H1 (cell line): ENCODE measurements at regions of chr3 and their contacts with region 1.

Region 1: GRCh38 chr3:10945683-10946287 is 46.8 kb upstream of the SLC6A1 start:
- DNase-seq: peak; percentile 64 to 92
- H3K4me3 ChIP-seq: no peak overlapping the region
- H3K27ac ChIP-seq: no peak overlapping the region
- H3K4me1 ChIP-seq: no peaks in the 10 kb centered on the region
- H3K27me3 ChIP-seq: no peaks in the 10 kb centered on the region; a peak in 1 of 7 replicates
- CTCF ChIP-seq: peak; percentile 79 to 96 (median 89)
- EP300 ChIP-seq: no peak
- POLR2A ChIP-seq: no peak
- RAD21 ChIP-seq: peak; percentile 84 to 94

Region 2: GRCh38 chr3:10683106-10683505 is 262.7 kb before region 1 on chr3:
- CTCF ChIA-PET with region 1: no interaction called
- POLR2A ChIA-PET with region 1: no interaction called
- DNase-seq: no peak
- H3K4me3 ChIP-seq: no peak overlapping the region
- H3K27ac ChIP-seq: no peak overlapping the region
- H3K4me1 ChIP-seq: no peaks in the 10 kb centered on the region
- H3K27me3 ChIP-seq: no peaks in the 10 kb centered on the region; a peak in 1 of 7 replicates
- CTCF ChIP-seq: no peak
- EP300 ChIP-seq: no peak
- POLR2A ChIP-seq: no peak
- RAD21 ChIP-seq: no peak

Region 3: DNA sequence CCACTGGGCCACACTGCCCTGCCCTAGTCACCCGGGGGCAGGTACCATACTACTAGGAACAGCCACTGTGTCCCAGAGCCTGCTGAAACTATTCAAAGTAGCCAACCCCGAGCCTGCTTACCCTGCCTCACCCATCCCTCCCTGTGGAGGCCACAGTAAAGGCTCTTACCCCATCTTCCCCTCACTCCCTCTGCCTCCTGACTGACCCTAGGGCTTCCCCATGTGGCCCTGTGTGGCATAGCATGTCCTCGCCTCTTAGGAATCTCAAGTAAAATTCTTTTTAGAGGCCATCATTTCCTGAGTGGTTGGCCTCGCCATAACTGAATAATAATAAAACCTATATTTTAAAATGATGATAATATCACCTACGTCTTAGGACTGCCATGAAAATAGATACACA is 241.9 kb before region 1 on chr3:
- CTCF ChIA-PET with region 1: no interaction called
- POLR2A ChIA-PET with region 1: no interaction called
- DNase-seq: peak; percentile 49 to 66
- H3K4me3 ChIP-seq: no peak overlapping the region
- H3K27ac ChIP-seq: no peak overlapping the region
- H3K4me1 ChIP-seq: peaks cover 2 to 10% (median 6%) of the 10 kb centered on the region in 4 experiments
- H3K27me3 ChIP-seq: peaks cover 8 to 39% (median 31%) of the 10 kb centered on the region in 4 experiments
- CTCF ChIP-seq: peak; percentile 78 to 87 (median 79)
- EP300 ChIP-seq: peak in 1 of 2 experiments; percentile 84; a peak in 1 of 3 replicates
- POLR2A ChIP-seq: no peak
- RAD21 ChIP-seq: peak; percentile 90 to 95

Region 4: GRCh38 chr3:10883478-10884234 is 62.1 kb before region 1 on chr3:
- CTCF ChIA-PET with region 1: interaction called, 10 read pairs
- POLR2A ChIA-PET with region 1: no interaction called
- DNase-seq: peak in 1 of 2 experiments; percentile 61
- H3K4me3 ChIP-seq: no peak overlapping the region
- H3K27ac ChIP-seq: no peak overlapping the region
- H3K4me1 ChIP-seq: no peaks in the 10 kb centered on the region; a peak in 1 of 7 replicates
- H3K27me3 ChIP-seq: peaks cover 0 to 15% (median 10%) of the 10 kb centered on the region in 4 experiments; a peak in 6 of 7 replicates
- CTCF ChIP-seq: peak in 2 of 3 experiments; percentile 66 to 68; a peak in 3 of 4 replicates
- EP300 ChIP-seq: no peak
- POLR2A ChIP-seq: no peak
- RAD21 ChIP-seq: peak; percentile 70 to 76

Region 5: DNA sequence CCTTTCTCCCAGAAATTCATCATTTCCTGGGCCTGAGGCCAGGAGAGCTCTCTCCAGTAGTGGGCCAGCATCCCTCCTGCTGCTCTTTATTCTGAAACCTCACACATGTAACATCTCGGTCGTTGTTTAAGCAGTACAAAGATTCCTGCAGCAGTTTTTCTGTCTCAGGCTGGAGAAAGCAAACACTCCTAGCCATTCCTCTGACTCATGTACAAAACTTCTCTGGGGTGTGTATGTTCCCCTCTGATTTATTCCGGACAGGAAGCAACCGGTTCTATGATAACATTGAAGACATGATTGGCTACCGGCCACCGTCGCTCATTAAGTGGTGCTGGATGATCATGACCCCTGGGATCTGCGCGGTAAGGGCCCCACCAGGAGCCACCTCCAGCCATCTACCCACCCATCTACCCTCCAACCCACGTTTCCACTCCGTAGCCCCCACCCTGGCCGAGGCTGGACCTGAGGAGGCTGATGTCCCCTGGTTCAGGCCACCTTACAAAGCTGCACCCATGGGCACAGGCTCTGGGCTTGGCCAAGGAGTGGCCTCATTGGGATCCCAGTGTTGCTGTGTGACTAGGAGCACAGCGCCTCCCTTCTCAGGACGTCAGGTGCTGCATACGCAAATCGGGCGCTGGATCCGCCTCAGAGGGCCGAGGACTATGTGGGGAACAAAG is 11.8 kb before region 1 on chr3:
- CTCF ChIA-PET with region 1: interaction called, 26 read pairs
- POLR2A ChIA-PET with region 1: no interaction called
- DNase-seq: no peak
- H3K4me3 ChIP-seq: no peak overlapping the region
- H3K27ac ChIP-seq: no peak overlapping the region
- H3K4me1 ChIP-seq: peaks cover 0 to 5% (median 2%) of the 10 kb centered on the region in 4 experiments; a peak in 4 of 7 replicates
- H3K27me3 ChIP-seq: no peaks in the 10 kb centered on the region
- CTCF ChIP-seq: peak; percentile 7 to 40 (median 28); a peak in 3 of 4 replicates
- EP300 ChIP-seq: no peak
- POLR2A ChIP-seq: no peak
- RAD21 ChIP-seq: peak; percentile 1 to 26; a peak in 3 of 4 replicates

Region 6: DNA sequence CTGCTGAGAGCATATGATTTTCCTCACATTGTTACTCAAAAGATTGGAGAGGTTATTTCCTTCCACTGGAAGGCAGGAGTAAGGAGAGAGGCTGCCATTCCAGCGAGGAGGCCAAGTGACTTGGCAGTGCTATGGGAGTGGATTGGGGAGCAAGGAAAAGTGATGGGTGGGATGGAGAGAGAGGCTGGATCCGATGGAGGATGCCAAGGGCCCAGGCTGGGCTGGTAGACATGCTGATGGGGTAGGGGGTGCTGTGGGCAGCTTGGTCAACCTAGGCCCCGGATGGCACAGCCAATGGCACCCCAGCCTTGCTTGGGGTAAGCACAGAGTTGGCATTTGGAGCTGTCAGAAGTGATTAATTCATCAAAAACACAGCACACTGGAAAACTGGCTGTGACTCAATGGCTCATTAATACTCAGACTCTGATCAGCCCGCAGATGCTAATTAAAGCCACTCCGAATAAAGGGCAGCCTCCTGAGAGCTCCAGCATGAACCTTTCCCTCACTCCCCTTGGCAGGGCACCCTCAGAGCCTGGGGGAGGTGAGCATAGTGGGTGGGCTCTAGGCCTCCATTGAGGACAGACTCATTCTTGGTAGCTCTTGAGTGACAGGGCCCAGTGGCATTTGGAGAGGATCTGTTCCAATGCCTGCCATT is 24.6 kb after region 1 on chr3:
- CTCF ChIA-PET with region 1: interaction called, 62 read pairs
- POLR2A ChIA-PET with region 1: no interaction called
- DNase-seq: no peak
- H3K4me3 ChIP-seq: no peak overlapping the region
- H3K27ac ChIP-seq: no peak overlapping the region
- H3K4me1 ChIP-seq: peaks cover 5 to 16% (median 11%) of the 10 kb centered on the region in 4 experiments
- H3K27me3 ChIP-seq: no peaks in the 10 kb centered on the region; a peak in 2 of 7 replicates
- CTCF ChIP-seq: no peak
- EP300 ChIP-seq: no peak
- POLR2A ChIP-seq: no peak
- RAD21 ChIP-seq: no peak

Region 7: GRCh38 chr3:11001020-11001656 is 55.4 kb after region 1 on chr3:
- CTCF ChIA-PET with region 1: interaction called, 48 read pairs
- POLR2A ChIA-PET with region 1: interaction called, 3 read pairs
- DNase-seq: no peak
- H3K4me3 ChIP-seq: no peak overlapping the region
- H3K27ac ChIP-seq: no peak overlapping the region
- H3K4me1 ChIP-seq: peaks cover 0 to 6% (median 0%) of the 10 kb centered on the region in 4 experiments; a peak in 2 of 7 replicates
- H3K27me3 ChIP-seq: no peaks in the 10 kb centered on the region; a peak in 1 of 7 replicates
- CTCF ChIP-seq: no peak
- EP300 ChIP-seq: no peak
- POLR2A ChIP-seq: no peak
- RAD21 ChIP-seq: no peak

Region 8: DNA sequence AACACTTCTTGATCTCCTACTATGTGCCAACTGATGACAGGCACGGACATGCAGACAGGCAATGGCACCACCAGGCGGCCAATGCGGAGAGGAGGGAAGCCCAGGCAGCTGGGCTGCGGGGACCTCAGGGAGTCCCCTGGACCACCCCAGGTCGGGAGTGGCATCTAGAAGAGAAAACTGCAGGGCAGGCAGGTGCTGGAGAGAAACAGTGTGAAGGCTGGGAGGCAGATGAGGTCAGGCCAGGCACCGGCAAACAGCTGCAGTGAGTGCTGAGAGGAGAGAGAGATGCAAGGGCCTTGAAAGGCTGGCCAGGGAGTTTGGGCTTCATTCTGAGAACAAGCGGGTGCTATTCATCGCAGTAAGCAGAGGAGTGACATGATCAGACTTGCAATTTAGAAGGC is 75.8 kb after region 1 on chr3:
- CTCF ChIA-PET with region 1: interaction called, 48 read pairs
- POLR2A ChIA-PET with region 1: no interaction called
- DNase-seq: peak in 1 of 2 experiments; percentile 54
- H3K4me3 ChIP-seq: no peak overlapping the region
- H3K27ac ChIP-seq: no peak overlapping the region
- H3K4me1 ChIP-seq: no peaks in the 10 kb centered on the region
- H3K27me3 ChIP-seq: peaks cover 0 to 6% (median under 1%) of the 10 kb centered on the region in 4 experiments; a peak in 2 of 7 replicates
- CTCF ChIP-seq: peak; percentile 32 to 63 (median 52)
- EP300 ChIP-seq: no peak
- POLR2A ChIP-seq: no peak
- RAD21 ChIP-seq: peak; percentile 55 to 61